HCT116 (cell line): ENCODE measurements at regions of chr9 and their contacts with region 1.

Region 1: DNA sequence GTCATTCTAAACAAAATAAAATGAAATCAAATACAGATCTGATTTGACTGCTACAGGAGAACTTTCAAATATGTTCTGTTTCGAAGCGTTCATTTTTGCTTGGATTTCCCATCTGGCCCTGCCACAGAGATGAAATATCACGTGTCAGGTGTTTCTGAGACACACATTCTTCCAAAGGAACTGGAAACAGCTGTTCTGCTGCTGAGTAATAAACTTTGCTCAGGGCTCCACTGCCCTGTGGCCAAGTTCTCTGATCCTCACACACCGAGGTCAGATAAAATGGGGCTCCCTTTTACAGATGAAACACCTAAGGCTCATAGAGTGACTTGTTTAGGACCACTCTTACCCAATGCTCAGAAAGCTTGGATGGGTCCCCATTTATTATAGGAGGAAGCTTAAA is 42.5 kb downstream of the FRMPD1 start:
- DNase-seq: no peak
- ATAC-seq: no peak
- H3K4me3 ChIP-seq: no peak overlapping the region
- H3K27ac ChIP-seq: no peak overlapping the region
- H3K4me1 ChIP-seq: no peaks in the 10 kb centered on the region
- H3K27me3 ChIP-seq: peaks cover 12% of the 10 kb centered on the region
- CTCF ChIP-seq: no peak
- POLR2A ChIP-seq: no peak
- RAD21 ChIP-seq: no peak

Region 2: GRCh38 chr9:37710046-37710445 is 16.8 kb after region 1 on chr9:
- CTCF ChIA-PET with region 1: no interaction called
- POLR2A ChIA-PET with region 1: no interaction called
- RAD21 ChIA-PET with region 1: no interaction called
- intact Hi-C with region 1: loop called (anchors 2 kb)
- DNase-seq: no peak
- ATAC-seq: no peak
- H3K4me3 ChIP-seq: no peak overlapping the region
- H3K27ac ChIP-seq: no peak overlapping the region
- H3K4me1 ChIP-seq: peaks cover 0 to 5% of the 10 kb centered on the region in 2 experiments; a peak in 2 of 4 replicates
- H3K27me3 ChIP-seq: no peaks in the 10 kb centered on the region
- CTCF ChIP-seq: no peak
- POLR2A ChIP-seq: no peak
- RAD21 ChIP-seq: no peak